Naive thymus-derived CD8-positive, alpha-beta T cell (primary cell): ENCODE measurements at regions of chr19 and their contacts with region 1.

Region 1: DNA sequence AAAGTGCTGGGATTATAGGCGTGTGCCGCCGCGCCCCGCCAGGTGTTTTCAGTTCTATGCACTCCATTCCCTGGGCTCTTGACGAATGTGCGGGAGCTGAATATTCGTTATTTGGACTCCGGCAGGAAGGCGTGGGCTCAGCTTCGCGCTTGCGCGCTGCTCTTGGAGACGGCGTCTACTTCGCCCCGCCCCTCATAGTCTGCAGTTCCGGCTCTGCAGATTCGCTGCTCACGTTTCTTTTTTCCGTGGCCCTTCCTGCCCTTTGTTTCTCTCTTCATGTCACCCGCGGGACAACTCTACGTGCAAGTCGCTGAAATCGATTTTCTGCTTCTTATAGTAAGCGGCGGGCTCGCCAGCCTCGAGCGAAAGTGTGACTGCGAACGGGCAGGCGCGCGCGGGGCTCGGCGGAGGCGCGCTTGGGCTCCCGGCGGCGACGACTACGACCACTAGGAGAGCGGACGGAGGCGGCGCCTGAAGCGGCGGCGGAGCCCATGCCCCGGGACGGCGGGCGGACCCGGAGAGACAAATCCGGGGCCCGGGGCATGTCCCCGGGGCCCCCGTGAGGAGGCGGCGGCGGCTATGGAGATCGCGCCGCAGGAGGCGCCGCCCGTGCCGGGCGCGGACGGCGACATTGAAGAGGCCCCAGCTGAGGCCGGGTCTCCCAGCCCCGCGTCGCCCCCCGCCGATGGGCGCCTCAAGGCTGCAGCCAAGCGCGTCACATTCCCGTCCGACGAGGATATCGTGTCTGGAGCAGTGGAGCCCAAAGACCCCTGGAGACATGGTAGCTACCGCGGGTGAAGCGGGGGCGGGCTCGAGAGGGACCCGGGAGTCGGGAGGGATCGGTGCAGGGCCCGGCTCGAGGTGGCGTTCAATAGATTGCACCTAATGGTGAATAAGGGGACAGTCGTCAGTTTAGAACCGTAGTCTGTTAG is at the start of gene PPP1R37:
- DNase-seq: peak; percentile 84 to 96 (median 90)
- ATAC-seq: peak; percentile 78 to 80
- H3K4me3 Mint-ChIP-seq: peak within 1 kb of the TSS; percentile 91 to 99 (median 94)
- H3K27ac Mint-ChIP-seq: peak within 1 kb of the TSS; percentile 97 to 100 (median 98)
- H3K4me1 Mint-ChIP-seq: peaks cover 46 to 81% (median 67%) of the 10 kb centered on the region in 4 donors
- H3K27me3 Mint-ChIP-seq: no peaks in the 10 kb centered on the region
- polyA plus RNA-seq, gene PPP1R37: 0.40 to 2.0 (median 0.83) TPM

Region 2: DNA sequence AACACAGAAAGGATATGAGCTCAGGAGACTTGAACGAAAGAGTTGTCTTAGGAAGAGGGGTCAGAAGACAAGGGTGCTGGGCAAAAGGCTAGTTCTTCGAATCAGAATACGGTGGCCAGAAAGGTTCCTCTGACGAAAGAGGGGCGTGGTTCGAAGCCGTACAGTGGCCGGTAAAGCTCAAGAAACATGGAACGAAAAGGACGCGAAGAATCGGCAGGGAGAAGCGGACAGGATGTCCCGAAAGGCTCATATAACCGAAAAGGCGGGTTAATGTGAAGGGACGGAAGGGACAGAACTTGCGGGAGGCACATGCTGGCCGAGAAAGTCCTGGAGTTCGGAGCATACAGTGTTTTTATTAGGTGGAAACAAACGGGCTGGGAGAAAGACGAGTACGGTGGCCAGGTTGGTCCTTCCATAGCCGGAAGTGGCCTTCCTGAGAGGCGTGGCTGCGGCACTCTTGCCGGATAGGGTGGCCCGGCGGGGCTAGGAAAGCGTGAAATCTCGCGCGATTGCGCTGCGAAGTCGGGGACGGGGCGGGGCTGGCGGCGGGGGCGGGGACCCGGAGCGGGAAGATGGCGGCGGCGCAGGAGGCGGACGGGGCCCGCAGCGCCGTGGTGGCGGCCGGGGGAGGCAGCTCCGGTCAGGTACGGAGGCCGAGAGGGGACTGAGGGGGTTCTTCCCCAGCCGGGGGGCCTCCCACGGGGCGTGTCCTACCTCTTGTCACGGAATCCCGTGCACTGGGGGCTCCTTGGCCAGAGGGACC is 138.0 kb before region 1 on chr19 and contains the start of gene CLPTM1:
- POLR2A ChIA-PET with region 1: interaction called, 13 read pairs
- DNase-seq: peak; percentile 93 to 98 (median 96)
- ATAC-seq: peak; percentile 91 to 95
- H3K4me3 Mint-ChIP-seq: peak within 1 kb of the TSS; percentile 94 to 100 (median 97)
- H3K27ac Mint-ChIP-seq: peak within 1 kb of the TSS; percentile 94 to 99 (median 98)
- H3K4me1 Mint-ChIP-seq: peaks cover 27 to 60% (median 48%) of the 10 kb centered on the region in 4 donors
- H3K27me3 Mint-ChIP-seq: no peaks in the 10 kb centered on the region
- polyA plus RNA-seq, gene CLPTM1: 13.2 to 20.6 (median 14.9) TPM

Region 3: DNA sequence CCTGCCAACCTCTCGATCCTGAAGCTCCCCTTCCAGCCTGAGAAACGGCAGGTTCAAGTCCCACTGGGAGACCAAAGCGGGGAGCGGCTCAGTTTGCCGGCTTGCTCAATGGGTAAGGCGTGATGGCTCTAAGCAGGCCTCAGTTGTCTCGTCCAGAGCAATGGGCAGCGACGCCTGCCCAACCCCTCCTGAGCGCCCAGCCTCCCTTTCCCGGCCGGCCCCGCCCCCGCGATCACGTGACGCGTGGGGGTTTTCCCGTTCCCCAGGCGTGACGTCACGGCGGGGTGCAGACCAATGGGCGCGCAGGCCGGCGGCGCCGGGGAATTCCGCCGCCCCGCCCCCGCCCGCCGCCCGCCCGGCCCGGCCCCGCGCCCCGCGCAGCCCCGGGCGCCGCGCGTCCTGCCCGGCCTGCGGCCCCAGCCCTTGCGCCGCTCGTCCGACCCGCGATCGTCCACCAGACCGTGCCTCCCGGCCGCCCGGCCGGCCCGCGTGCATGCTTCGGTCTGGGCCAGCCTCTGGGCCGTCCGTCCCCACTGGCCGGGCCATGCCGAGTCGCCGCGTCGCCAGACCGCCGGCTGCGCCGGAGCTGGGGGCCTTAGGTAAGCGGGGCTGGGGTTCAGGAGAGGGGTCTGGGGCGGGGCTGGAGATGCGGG is 91.8 kb before region 1 on chr19 and contains the start of gene RELB:
- POLR2A ChIA-PET with region 1: interaction called, 11 read pairs
- DNase-seq: peak; percentile 90 to 99 (median 96)
- ATAC-seq: peak; percentile 71 to 73
- H3K4me3 Mint-ChIP-seq: peak within 1 kb of the TSS; percentile 89 to 100 (median 97)
- H3K27ac Mint-ChIP-seq: peak within 1 kb of the TSS; percentile 95 to 100 (median 100)
- H3K4me1 Mint-ChIP-seq: peaks cover 6 to 28% (median 12%) of the 10 kb centered on the region in 4 donors
- H3K27me3 Mint-ChIP-seq: peaks cover 0 to 2% (median 0%) of the 10 kb centered on the region in 5 donors
- polyA plus RNA-seq, gene RELB: 6.7 to 17.2 (median 8.3) TPM

Region 4: GRCh38 chr19:45038931-45039893 is 53.8 kb before region 1 on chr19 and contains the start of gene CLASRP:
- POLR2A ChIA-PET with region 1: interaction called, 26 read pairs
- DNase-seq: peak; percentile 79 to 90 (median 86)
- ATAC-seq: peak; percentile 91 to 95
- H3K4me3 Mint-ChIP-seq: peak within 1 kb of the TSS; percentile 93 to 99 (median 97)
- H3K27ac Mint-ChIP-seq: peak within 1 kb of the TSS; percentile 87 to 99 (median 96)
- H3K4me1 Mint-ChIP-seq: peaks cover 19 to 45% (median 39%) of the 10 kb centered on the region in 4 donors
- H3K27me3 Mint-ChIP-seq: no peaks in the 10 kb centered on the region
- polyA plus RNA-seq, gene CLASRP: 2.0 to 6.7 (median 5.3) TPM

Region 5: GRCh38 chr19:45079063-45079910 is 13.7 kb before region 1 on chr19 and contains the start of gene GEMIN7:
- POLR2A ChIA-PET with region 1: interaction called, 34 read pairs
- DNase-seq: peak; percentile 59 to 80 (median 77)
- ATAC-seq: peak; percentile 69 to 81
- H3K4me3 Mint-ChIP-seq: peak within 1 kb of the TSS; percentile 91 to 97 (median 94)
- H3K27ac Mint-ChIP-seq: peak within 1 kb of the TSS; percentile 83 to 94 (median 92)
- H3K4me1 Mint-ChIP-seq: peaks cover 15 to 65% (median 58%) of the 10 kb centered on the region in 4 donors
- H3K27me3 Mint-ChIP-seq: no peaks in the 10 kb centered on the region
- polyA plus RNA-seq, gene GEMIN7: 44.2 to 70.0 (median 50.3) TPM

Region 6: GRCh38 chr19:45103156-45103507 is 10.1 kb after region 1 on chr19:
- POLR2A ChIA-PET with region 1: interaction called, 42 read pairs
- DNase-seq: peak in 7 of 10 donors; percentile 35 to 76 (median 55)
- ATAC-seq: peak; percentile 91 to 93
- H3K4me3 Mint-ChIP-seq: peak overlapping the region; percentile 36 to 82 (median 75)
- H3K27ac Mint-ChIP-seq: peak overlapping the region; percentile 61 to 93 (median 88)
- H3K4me1 Mint-ChIP-seq: peaks cover 39 to 82% (median 73%) of the 10 kb centered on the region in 4 donors
- H3K27me3 Mint-ChIP-seq: no peaks in the 10 kb centered on the region